ENCODE measurements at regions of chr3 and their contacts with region 1.

Region 1: DNA sequence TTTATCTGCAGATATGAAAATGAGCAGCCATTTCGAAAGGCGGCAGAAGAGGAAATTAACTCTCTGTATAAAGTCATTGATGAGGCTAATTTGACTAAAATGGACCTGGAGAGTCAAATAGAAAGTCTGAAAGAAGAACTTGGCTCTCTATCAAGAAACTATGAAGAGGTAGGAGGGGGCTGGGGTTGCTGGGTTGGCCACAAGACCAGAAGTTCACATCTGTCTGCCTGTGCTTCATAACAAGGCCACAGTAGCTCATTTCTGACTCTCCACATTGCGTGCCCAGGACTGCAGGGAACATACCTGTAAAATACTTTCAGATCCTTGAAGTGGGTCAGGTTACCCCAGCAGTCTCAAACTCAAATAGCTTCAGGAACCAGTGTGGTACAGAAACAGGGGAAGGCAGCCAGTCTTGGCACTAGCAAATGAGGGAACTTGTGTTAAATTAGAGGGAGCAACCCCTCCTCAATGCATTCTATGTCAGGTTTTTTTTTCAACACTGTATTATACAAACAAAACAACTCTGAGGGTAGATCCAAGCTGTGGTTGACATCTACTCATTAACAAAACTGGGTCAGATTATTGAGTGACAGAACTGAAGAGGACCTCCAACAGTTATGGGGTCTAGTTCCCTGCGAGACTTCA is 48.7 kb downstream of the BFSP2 start:
- DNase-seq: peak; percentile 76
- H3K4me3 Mint-ChIP-seq: no peak overlapping the region
- H3K27ac Mint-ChIP-seq: peak overlapping the region; percentile 42
- H3K4me1 Mint-ChIP-seq: peaks cover 36% of the 10 kb centered on the region
- H3K27me3 Mint-ChIP-seq: no peaks in the 10 kb centered on the region

Region 2: GRCh38 chr3:132911736-132912414 is 536.7 kb before region 1 on chr3:
- CTCF ChIA-PET with region 1: no interaction called
- intact Hi-C with region 1: no loop called
- DNase-seq: no peak
- H3K4me3 Mint-ChIP-seq: no peak overlapping the region
- H3K27ac Mint-ChIP-seq: no peak overlapping the region
- H3K4me1 Mint-ChIP-seq: no peaks in the 10 kb centered on the region
- H3K27me3 Mint-ChIP-seq: no peaks in the 10 kb centered on the region

Region 3: DNA sequence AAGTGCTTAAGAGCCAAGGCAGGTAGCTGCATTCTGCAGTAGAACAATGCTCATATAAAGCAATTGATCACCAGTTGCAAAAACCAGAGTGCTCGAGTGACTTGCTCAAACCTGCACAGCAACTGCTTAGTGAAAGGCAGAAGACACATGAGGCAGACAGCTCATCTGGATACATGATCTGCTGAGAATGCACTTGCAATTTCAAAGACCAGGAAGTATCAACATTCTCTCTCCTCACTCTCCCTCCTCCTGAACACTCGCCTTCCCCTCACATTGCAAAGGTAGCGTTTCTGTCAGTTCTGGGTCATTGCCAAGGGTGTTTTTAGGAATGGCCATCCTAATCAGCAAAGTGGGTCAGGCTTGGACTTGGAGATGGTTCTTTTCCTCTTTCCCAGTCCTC is 12.2 kb after region 1 on chr3:
- CTCF ChIA-PET with region 1: interaction called, 4 read pairs
- intact Hi-C with region 1: loop called (anchors 1 kb)
- DNase-seq: peak; percentile 44
- H3K4me3 Mint-ChIP-seq: no peak overlapping the region
- H3K27ac Mint-ChIP-seq: no peak overlapping the region
- H3K4me1 Mint-ChIP-seq: peaks cover 28% of the 10 kb centered on the region
- H3K27me3 Mint-ChIP-seq: no peaks in the 10 kb centered on the region

Region 4: DNA sequence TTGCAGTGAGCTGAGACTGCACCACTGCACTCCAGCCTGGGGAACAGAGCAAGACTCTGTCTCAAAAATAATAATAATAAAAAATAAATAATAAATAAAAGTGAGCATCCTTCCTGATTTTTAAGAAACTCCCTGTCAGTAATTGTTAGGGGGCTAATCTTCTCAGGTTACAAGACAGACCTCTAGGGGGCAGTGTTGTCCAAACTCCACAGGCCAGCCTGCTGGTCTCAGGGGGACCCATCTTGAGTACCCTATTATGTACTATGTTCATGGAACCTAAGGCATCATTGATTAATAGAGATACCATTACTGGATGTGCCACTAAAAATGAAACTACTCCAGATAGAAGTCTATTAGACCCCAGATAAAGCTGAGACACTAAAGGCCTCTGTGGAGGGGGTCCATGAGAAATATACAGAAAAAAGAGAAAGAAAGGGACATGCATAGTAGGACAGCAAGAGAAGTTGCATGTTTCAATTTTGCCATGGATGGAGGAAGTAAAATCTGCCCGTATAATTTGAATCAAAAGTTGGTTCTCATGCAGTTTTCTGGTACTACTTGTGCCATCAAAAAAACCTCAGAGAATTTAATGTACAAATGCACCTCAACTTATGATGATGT is 39.4 kb after region 1 on chr3:
- CTCF ChIA-PET with region 1: interaction called, 5 read pairs
- intact Hi-C with region 1: loop called (anchors 1 kb)
- DNase-seq: peak; percentile 72
- H3K4me3 Mint-ChIP-seq: no peak overlapping the region
- H3K27ac Mint-ChIP-seq: no peak overlapping the region
- H3K4me1 Mint-ChIP-seq: peaks cover 49% of the 10 kb centered on the region
- H3K27me3 Mint-ChIP-seq: no peaks in the 10 kb centered on the region

Region 5: GRCh38 chr3:133588784-133589465 is 140.3 kb after region 1 on chr3:
- CTCF ChIA-PET with region 1: no interaction called
- intact Hi-C with region 1: no loop called
- DNase-seq: no peak
- H3K4me3 Mint-ChIP-seq: no peak overlapping the region
- H3K27ac Mint-ChIP-seq: peak overlapping the region; percentile 1
- H3K4me1 Mint-ChIP-seq: peaks cover 25% of the 10 kb centered on the region
- H3K27me3 Mint-ChIP-seq: no peaks in the 10 kb centered on the region

Region 6: GRCh38 chr3:133661454-133662277 is 213.1 kb after region 1 on chr3 and contains the start of gene TOPBP1:
- CTCF ChIA-PET with region 1: no interaction called
- intact Hi-C with region 1: loop called (anchors 1 kb)
- DNase-seq: peak; percentile 94
- H3K4me3 Mint-ChIP-seq: peak within 1 kb of the TSS; percentile 98
- H3K27ac Mint-ChIP-seq: peak within 1 kb of the TSS; percentile 98
- H3K4me1 Mint-ChIP-seq: peaks cover 28% of the 10 kb centered on the region
- H3K27me3 Mint-ChIP-seq: no peaks in the 10 kb centered on the region
- total RNA-seq, gene TOPBP1: 65.4 to 65.8 TPM

Region 7: DNA sequence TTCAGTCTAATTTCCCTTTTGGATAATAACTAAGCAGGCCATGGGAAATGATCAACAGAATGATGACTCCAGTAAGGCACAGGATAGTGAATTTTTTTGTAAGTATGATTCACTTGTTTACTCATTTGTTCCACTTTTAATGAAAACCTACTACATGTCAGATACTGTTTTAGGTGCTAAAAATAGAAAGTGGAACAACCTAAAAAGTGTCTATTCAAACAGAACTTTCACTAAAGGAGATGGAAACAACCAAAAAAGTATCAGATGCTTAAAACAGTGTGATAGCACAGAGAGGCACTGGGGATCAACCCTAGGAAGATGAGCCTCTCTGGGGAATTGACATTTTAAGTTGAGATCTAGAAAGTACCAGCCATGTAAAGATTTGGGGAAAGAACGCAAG is 790.9 kb after region 1 on chr3:
- CTCF ChIA-PET with region 1: no interaction called
- intact Hi-C with region 1: loop called (anchors 10 kb)
- DNase-seq: peak; percentile 45
- H3K4me3 Mint-ChIP-seq: peak overlapping the region; percentile 30
- H3K27ac Mint-ChIP-seq: peak overlapping the region; percentile 88
- H3K4me1 Mint-ChIP-seq: peaks cover 94% of the 10 kb centered on the region
- H3K27me3 Mint-ChIP-seq: no peaks in the 10 kb centered on the region